CD4-positive, alpha-beta T cell (primary cell): ENCODE measurements at regions of chr1 and their contacts with region 1.

Region 1: GRCh38 chr1:58783993-58784757 is at the start of gene JUN:
- DNase-seq: peak; percentile 97 to 100 (median 98)
- ATAC-seq: peak; percentile 73
- H3K4me3 ChIP-seq: peak within 1 kb of the TSS; percentile 70
- H3K4me3 Mint-ChIP-seq: peak within 1 kb of the TSS; percentile 95
- H3K27ac ChIP-seq: peak within 1 kb of the TSS; percentile 99
- H3K27ac Mint-ChIP-seq: peak within 1 kb of the TSS; percentile 94
- H3K4me1 ChIP-seq: peaks cover 33% of the 10 kb centered on the region
- H3K4me1 Mint-ChIP-seq: peaks cover 38% of the 10 kb centered on the region
- H3K27me3 ChIP-seq: no peaks in the 10 kb centered on the region
- H3K27me3 Mint-ChIP-seq: peaks cover 11% of the 10 kb centered on the region
- CTCF ChIP-seq: no peak
- total RNA-seq, gene JUN: 585 to 588 TPM

Region 2: DNA sequence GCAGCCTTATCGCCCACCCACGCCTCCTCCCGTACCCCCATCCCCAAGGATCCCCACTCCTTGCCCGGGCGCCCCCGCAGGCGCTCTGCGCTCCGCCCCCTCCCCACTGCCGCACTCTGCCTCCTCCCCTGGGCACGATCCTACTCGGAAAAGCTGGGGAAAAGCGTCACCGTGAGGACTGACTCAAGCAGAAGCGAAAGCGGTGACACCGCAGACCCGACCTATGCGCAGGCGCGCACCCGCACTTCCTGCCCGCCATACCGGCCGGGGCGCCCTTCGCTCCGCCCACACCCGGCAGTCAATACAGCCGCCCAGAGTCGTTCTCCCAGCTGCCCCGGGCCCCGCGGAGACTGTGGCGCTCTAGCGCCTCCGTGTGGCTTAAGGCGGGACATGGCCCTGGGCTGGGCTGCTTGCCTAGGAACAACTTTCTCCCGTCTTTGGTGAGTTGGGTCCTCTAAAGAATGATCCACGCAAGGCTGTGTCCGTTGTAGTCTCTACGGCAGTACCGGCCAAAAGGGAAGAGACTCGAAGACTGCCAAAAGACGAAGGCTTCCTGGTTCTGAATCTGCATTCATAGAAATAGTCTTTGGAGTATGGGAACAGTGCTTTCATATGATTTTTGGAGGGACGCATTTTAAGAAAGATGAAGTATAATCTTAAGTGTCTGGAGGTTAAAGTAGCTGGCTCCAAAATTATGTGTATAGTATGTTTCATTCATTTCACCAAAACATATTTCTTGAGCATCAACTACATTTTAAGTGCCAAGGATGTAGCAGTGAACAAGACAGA is 237.5 kb before region 1 on chr1 and contains the start of gene OMA1:
- CTCF ChIA-PET with region 1: no interaction called
- POLR2A ChIA-PET with region 1: interaction called, 10 read pairs
- intact Hi-C with region 1: loop called in 1 of 2 experiments (anchors 5 kb)
- DNase-seq: peak; percentile 93 to 99 (median 98)
- ATAC-seq: peak; percentile 89
- H3K4me3 ChIP-seq: peak within 1 kb of the TSS; percentile 82
- H3K4me3 Mint-ChIP-seq: peak within 1 kb of the TSS; percentile 97
- H3K27ac ChIP-seq: peak within 1 kb of the TSS; percentile 96 to 97
- H3K27ac Mint-ChIP-seq: peak within 1 kb of the TSS; percentile 97
- H3K4me1 ChIP-seq: peaks cover 15% of the 10 kb centered on the region
- H3K4me1 Mint-ChIP-seq: peaks cover 35% of the 10 kb centered on the region
- H3K27me3 ChIP-seq: peaks cover 0 to under 1% of the 10 kb centered on the region in 2 experiments
- H3K27me3 Mint-ChIP-seq: peaks cover 6% of the 10 kb centered on the region
- CTCF ChIP-seq: peak; percentile 93
- total RNA-seq, gene OMA1: 23.7 to 27.7 TPM

Region 3: GRCh38 chr1:58773406-58773840 is 10.8 kb before region 1 on chr1:
- CTCF ChIA-PET with region 1: no interaction called
- POLR2A ChIA-PET with region 1: interaction called, 22 read pairs
- intact Hi-C with region 1: no loop called
- DNase-seq: peak in 4 of 14 experiments; percentile 7 to 37 (median 30)
- ATAC-seq: peak; percentile 82
- H3K4me3 ChIP-seq: no peak overlapping the region
- H3K4me3 Mint-ChIP-seq: no peak overlapping the region
- H3K27ac ChIP-seq: no peak overlapping the region
- H3K27ac Mint-ChIP-seq: peak overlapping the region; percentile 63
- H3K4me1 ChIP-seq: peaks cover 6% of the 10 kb centered on the region
- H3K4me1 Mint-ChIP-seq: peaks cover 14% of the 10 kb centered on the region
- H3K27me3 ChIP-seq: peaks cover 0 to 2% of the 10 kb centered on the region in 2 experiments
- H3K27me3 Mint-ChIP-seq: no peaks in the 10 kb centered on the region
- CTCF ChIP-seq: no peak

Region 4: GRCh38 chr1:58903514-58904298 is 119.5 kb after region 1 on chr1:
- CTCF ChIA-PET with region 1: no interaction called
- POLR2A ChIA-PET with region 1: interaction called, 4 read pairs
- intact Hi-C with region 1: loop called (anchors 1 to 2 kb)
- DNase-seq: peak; percentile 44 to 86 (median 65)
- ATAC-seq: peak; percentile 83
- H3K4me3 ChIP-seq: peak overlapping the region; percentile 51
- H3K4me3 Mint-ChIP-seq: peak overlapping the region; percentile 77
- H3K27ac ChIP-seq: no peak overlapping the region
- H3K27ac Mint-ChIP-seq: peak overlapping the region; percentile 73
- H3K4me1 ChIP-seq: peaks cover 14% of the 10 kb centered on the region
- H3K4me1 Mint-ChIP-seq: peaks cover 9% of the 10 kb centered on the region
- H3K27me3 ChIP-seq: no peaks in the 10 kb centered on the region
- H3K27me3 Mint-ChIP-seq: no peaks in the 10 kb centered on the region
- CTCF ChIP-seq: no peak

Region 5: GRCh38 chr1:59020151-59020997 is 236.2 kb after region 1 on chr1:
- CTCF ChIA-PET with region 1: no interaction called
- POLR2A ChIA-PET with region 1: interaction called, 15 read pairs
- intact Hi-C with region 1: loop called in 1 of 2 experiments (anchors 10 kb)
- DNase-seq: peak; percentile 3 to 86 (median 35)
- ATAC-seq: peak; percentile 92
- H3K4me3 ChIP-seq: peak overlapping the region; percentile 46
- H3K4me3 Mint-ChIP-seq: peak overlapping the region; percentile 83
- H3K27ac ChIP-seq: peak overlapping the region; percentile 25 to 54
- H3K27ac Mint-ChIP-seq: peak overlapping the region; percentile 88
- H3K4me1 ChIP-seq: peaks cover 24% of the 10 kb centered on the region
- H3K4me1 Mint-ChIP-seq: peaks cover 17% of the 10 kb centered on the region
- H3K27me3 ChIP-seq: no peaks in the 10 kb centered on the region
- H3K27me3 Mint-ChIP-seq: no peaks in the 10 kb centered on the region
- CTCF ChIP-seq: no peak

Region 6: GRCh38 chr1:59296358-59297256 is 512.4 kb after region 1 on chr1 and contains the start of gene FGGY:
- CTCF ChIA-PET with region 1: no interaction called
- POLR2A ChIA-PET with region 1: interaction called, 35 read pairs
- intact Hi-C with region 1: loop called (anchors 2 kb)
- DNase-seq: peak; percentile 60 to 94 (median 77)
- ATAC-seq: peak; percentile 91
- H3K4me3 ChIP-seq: peak within 1 kb of the TSS; percentile 80
- H3K4me3 Mint-ChIP-seq: peak within 1 kb of the TSS; percentile 88
- H3K27ac ChIP-seq: peak within 1 kb of the TSS; percentile 74 to 76
- H3K27ac Mint-ChIP-seq: peak within 1 kb of the TSS; percentile 85
- H3K4me1 ChIP-seq: peaks cover 10% of the 10 kb centered on the region
- H3K4me1 Mint-ChIP-seq: peaks cover 16% of the 10 kb centered on the region
- H3K27me3 ChIP-seq: no peaks in the 10 kb centered on the region
- H3K27me3 Mint-ChIP-seq: no peaks in the 10 kb centered on the region
- CTCF ChIP-seq: no peak
- total RNA-seq, gene FGGY: 9.5 to 10.0 TPM

Region 7: GRCh38 chr1:59455206-59455605 is 671.0 kb after region 1 on chr1:
- CTCF ChIA-PET with region 1: no interaction called
- POLR2A ChIA-PET with region 1: no interaction called
- intact Hi-C with region 1: no loop called
- DNase-seq: peak in 1 of 14 experiments; percentile 8
- ATAC-seq: no peak
- H3K4me3 ChIP-seq: no peak overlapping the region
- H3K4me3 Mint-ChIP-seq: no peak overlapping the region
- H3K27ac ChIP-seq: no peak overlapping the region
- H3K27ac Mint-ChIP-seq: no peak overlapping the region
- H3K4me1 ChIP-seq: no peaks in the 10 kb centered on the region
- H3K4me1 Mint-ChIP-seq: no peaks in the 10 kb centered on the region
- H3K27me3 ChIP-seq: no peaks in the 10 kb centered on the region
- H3K27me3 Mint-ChIP-seq: no peaks in the 10 kb centered on the region
- CTCF ChIP-seq: no peak